GM12878 (cell line): ENCODE measurements at regions of chr1 and their contacts with region 1.

Region 1: DNA sequence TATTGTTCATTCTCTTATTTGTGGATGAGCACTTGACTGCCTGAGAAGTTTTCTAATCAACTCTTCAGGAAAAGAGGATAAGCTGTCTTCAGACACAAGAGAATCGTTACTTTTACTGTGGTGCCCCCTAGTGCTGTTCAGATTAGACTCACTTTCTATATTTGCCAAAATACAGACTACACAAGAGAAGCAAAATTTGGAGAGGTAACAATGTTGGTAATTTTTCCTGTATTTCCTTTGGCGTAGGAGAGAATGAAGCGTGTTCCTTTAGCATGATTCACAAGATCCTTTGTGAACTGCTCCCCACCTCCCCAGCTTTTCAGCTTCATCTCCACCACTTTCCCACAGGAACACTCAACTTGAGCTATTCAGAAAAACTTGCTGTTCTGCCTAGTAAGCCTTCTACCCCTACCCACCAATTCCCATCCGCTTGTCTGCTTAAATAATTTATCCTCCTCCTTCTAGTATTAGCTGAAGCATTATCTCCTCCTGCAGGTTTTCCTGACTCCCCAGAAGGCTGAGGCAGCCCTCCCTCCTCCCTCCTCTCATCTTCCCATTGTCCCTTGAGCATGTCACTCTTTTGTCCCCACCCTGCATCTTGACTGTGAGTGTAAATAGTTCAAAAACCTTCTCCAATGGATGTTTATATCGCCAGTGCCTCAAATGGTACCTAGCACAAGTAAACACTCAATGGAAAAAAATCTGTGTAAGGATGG is 4.5 kb downstream of the TNFSF4 start:
- DNase-seq: no peak
- ATAC-seq: peak; percentile 54
- H3K4me3 ChIP-seq: no peak overlapping the region
- H3K27ac ChIP-seq: no peak overlapping the region
- H3K4me1 ChIP-seq: peaks cover 14% of the 10 kb centered on the region
- H3K27me3 ChIP-seq: no peaks in the 10 kb centered on the region
- CTCF ChIP-seq: peak; percentile 54 to 69 (median 62)
- EP300 ChIP-seq: no peak
- POLR2A ChIP-seq: no peak
- RAD21 ChIP-seq: peak; percentile 90

Region 2: DNA sequence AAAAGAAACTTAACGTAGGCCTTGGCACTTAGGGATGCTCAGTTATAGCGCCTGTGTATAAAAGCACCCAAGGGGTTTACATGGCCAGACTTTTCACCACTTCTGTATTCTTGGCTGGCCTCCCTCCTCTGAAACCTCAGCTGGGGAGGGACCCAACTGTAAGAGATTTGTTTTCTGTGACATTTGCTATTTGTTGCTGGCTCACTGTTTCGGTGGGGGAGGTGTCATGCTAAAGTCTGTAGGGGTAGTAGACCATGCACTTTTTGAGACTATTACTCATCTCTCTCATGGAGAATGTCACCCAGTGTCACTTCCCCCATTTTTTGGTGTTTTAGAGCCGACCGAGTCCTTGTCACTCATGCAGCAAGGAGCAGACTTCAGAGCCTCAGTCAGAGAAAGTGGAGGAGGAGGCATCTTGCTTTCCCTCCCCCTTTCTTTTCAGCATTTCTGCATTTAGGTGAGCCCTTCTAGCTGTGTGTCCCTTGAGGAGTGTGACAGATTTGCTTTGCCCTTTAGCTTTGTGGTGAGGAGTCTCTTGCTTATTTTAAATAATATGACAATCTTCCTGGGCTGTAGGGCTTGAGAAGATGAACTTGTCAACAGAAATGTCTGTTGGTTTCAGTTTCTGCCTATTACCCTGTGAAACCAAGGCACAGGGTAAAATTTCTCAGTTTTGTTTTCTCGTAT is 383.6 kb before region 1 on chr1:
- CTCF ChIA-PET with region 1: interaction called, 414 read pairs
- POLR2A ChIA-PET with region 1: interaction called, 4 read pairs
- RAD21 ChIA-PET with region 1: interaction called, 245 read pairs
- SMC1A ChIA-PET with region 1: interaction called, 316 read pairs
- in situ Hi-C with region 1: loop called (anchors 5 kb)
- intact Hi-C with region 1: loop called (anchors 2 kb)
- DNase-seq: peak; percentile 99
- ATAC-seq: peak; percentile 95
- H3K4me3 ChIP-seq: no peak overlapping the region; the same call in 1 of the 2 replicates
- H3K27ac ChIP-seq: peak overlapping the region; percentile 73
- H3K4me1 ChIP-seq: peaks cover 32% of the 10 kb centered on the region
- H3K27me3 ChIP-seq: no peaks in the 10 kb centered on the region
- CTCF ChIP-seq: no peak
- EP300 ChIP-seq: peak; percentile 91 to 92
- POLR2A ChIP-seq: no peak
- RAD21 ChIP-seq: peak; percentile 23; the same call in 1 of the 2 replicates

Region 3: DNA sequence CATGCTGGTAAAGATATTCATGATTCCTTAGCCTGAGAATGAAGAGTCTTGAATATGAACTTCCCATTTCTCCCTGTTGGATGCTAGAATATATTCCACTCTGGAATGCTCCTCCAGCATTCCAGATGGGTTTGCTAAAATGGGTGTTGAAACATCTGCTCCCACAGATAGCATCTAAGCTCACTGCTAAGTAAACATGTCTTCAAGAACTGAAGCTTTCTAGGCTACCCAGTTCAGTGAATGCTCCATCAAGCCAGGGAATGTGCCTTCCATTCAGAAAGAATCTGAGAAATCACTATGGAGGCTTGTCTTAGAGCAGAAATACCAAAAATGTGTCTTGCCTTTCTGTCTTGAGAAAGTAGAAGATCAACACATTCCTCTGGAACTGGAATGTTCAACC is 233.0 kb before region 1 on chr1:
- CTCF ChIA-PET with region 1: no interaction called
- POLR2A ChIA-PET with region 1: no interaction called
- RAD21 ChIA-PET with region 1: no interaction called
- SMC1A ChIA-PET with region 1: no interaction called
- in situ Hi-C with region 1: no loop called
- intact Hi-C with region 1: no loop called
- DNase-seq: no peak
- ATAC-seq: no peak
- H3K4me3 ChIP-seq: no peak overlapping the region
- H3K27ac ChIP-seq: no peak overlapping the region
- H3K4me1 ChIP-seq: no peaks in the 10 kb centered on the region
- H3K27me3 ChIP-seq: peaks cover 2% of the 10 kb centered on the region in 2 experiments; a peak in 2 of 4 replicates
- CTCF ChIP-seq: no peak
- EP300 ChIP-seq: no peak
- POLR2A ChIP-seq: no peak
- RAD21 ChIP-seq: no peak

Region 4: GRCh38 chr1:173099166-173099565 is 103.4 kb before region 1 on chr1:
- CTCF ChIA-PET with region 1: no interaction called
- POLR2A ChIA-PET with region 1: no interaction called
- RAD21 ChIA-PET with region 1: no interaction called
- SMC1A ChIA-PET with region 1: no interaction called
- in situ Hi-C with region 1: no loop called
- intact Hi-C with region 1: no loop called
- DNase-seq: no peak
- ATAC-seq: no peak
- H3K4me3 ChIP-seq: no peak overlapping the region
- H3K27ac ChIP-seq: no peak overlapping the region
- H3K4me1 ChIP-seq: no peaks in the 10 kb centered on the region
- H3K27me3 ChIP-seq: no peaks in the 10 kb centered on the region; a peak in 1 of 4 replicates
- CTCF ChIP-seq: no peak
- EP300 ChIP-seq: no peak
- POLR2A ChIP-seq: no peak
- RAD21 ChIP-seq: no peak

Region 5: GRCh38 chr1:173134029-173134428 is 68.6 kb before region 1 on chr1:
- CTCF ChIA-PET with region 1: no interaction called
- POLR2A ChIA-PET with region 1: no interaction called
- RAD21 ChIA-PET with region 1: no interaction called
- SMC1A ChIA-PET with region 1: no interaction called
- in situ Hi-C with region 1: no loop called
- intact Hi-C with region 1: no loop called
- DNase-seq: no peak
- ATAC-seq: no peak
- H3K4me3 ChIP-seq: no peak overlapping the region
- H3K27ac ChIP-seq: no peak overlapping the region
- H3K4me1 ChIP-seq: no peaks in the 10 kb centered on the region
- H3K27me3 ChIP-seq: no peaks in the 10 kb centered on the region
- CTCF ChIP-seq: no peak
- EP300 ChIP-seq: no peak
- POLR2A ChIP-seq: no peak
- RAD21 ChIP-seq: no peak

Region 6: DNA sequence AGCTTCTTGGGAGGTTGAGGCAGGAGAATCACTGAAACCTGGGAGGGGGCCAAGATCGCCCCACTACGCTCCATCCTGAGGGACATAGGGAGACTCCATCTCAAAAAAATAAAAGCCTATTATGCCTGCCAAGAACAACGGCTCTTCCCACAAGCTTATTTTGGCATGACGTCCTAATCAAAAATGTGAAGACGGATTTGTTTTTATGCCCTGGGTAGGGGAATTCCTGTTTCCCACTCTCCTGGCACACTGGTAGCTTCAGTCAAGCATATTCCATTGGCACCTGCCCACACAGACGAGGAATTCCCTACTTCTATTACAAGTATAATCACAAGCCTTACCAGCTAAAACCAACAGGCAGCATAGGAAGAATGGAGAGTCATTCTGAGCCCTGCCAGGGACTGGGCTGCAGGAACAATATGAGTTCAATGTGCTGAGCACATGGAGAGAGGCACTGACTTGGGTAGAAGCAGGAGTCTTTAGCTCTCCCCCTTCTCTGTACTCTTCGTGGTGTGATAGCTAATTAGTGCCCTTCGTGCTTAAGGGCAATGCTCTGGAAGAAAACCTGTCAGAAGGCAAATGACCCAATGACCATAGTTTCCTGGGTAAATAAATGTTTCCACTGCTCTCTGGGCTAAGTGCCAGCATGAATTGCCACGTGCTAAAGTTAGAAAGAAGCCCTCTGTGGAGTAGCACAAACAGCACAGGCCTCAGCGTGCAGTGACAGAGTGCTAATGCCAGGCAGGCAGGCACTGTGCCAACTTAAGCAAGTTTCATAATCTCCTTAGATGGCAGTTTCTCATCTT is 12.3 kb before region 1 on chr1:
- CTCF ChIA-PET with region 1: interaction called, 74 read pairs
- POLR2A ChIA-PET with region 1: interaction called, 3 read pairs
- RAD21 ChIA-PET with region 1: interaction called, 25 read pairs
- SMC1A ChIA-PET with region 1: interaction called, 77 read pairs
- in situ Hi-C with region 1: no loop called
- intact Hi-C with region 1: no loop called
- DNase-seq: peak; percentile 63
- ATAC-seq: peak; percentile 59
- H3K4me3 ChIP-seq: no peak overlapping the region
- H3K27ac ChIP-seq: no peak overlapping the region
- H3K4me1 ChIP-seq: no peaks in the 10 kb centered on the region
- H3K27me3 ChIP-seq: no peaks in the 10 kb centered on the region
- CTCF ChIP-seq: no peak
- EP300 ChIP-seq: no peak
- POLR2A ChIP-seq: no peak
- RAD21 ChIP-seq: no peak

Region 7: GRCh38 chr1:173249349-173249748 is 46.8 kb after region 1 on chr1:
- CTCF ChIA-PET with region 1: interaction called, 12 read pairs
- POLR2A ChIA-PET with region 1: no interaction called
- RAD21 ChIA-PET with region 1: interaction called, 4 read pairs
- SMC1A ChIA-PET with region 1: interaction called, 22 read pairs
- in situ Hi-C with region 1: no loop called
- intact Hi-C with region 1: no loop called
- DNase-seq: no peak
- ATAC-seq: peak; percentile 53
- H3K4me3 ChIP-seq: no peak overlapping the region
- H3K27ac ChIP-seq: no peak overlapping the region
- H3K4me1 ChIP-seq: no peaks in the 10 kb centered on the region
- H3K27me3 ChIP-seq: no peaks in the 10 kb centered on the region
- CTCF ChIP-seq: no peak
- EP300 ChIP-seq: no peak
- POLR2A ChIP-seq: no peak
- RAD21 ChIP-seq: no peak

Region 8: DNA sequence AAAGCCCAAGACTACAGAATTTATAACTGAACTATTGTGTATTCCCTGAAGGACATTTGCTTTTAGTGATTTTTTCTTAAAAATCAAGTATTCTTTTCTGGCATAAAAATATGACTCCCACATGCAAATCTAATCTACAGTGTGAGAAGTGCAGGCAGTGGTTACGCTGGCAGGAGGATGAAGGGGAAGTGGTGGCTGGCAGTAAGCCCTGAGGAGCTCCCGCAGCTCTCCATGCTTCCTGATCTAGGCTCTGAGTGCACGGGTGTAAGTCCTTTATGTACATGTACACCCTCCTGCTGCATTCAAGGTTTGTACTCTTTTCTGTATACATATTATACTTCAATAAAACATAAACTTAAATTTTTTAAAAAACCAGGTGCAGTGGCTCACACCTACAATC is 207.0 kb after region 1 on chr1:
- CTCF ChIA-PET with region 1: interaction called, 34 read pairs
- POLR2A ChIA-PET with region 1: interaction called, 7 read pairs
- RAD21 ChIA-PET with region 1: interaction called, 105 read pairs
- SMC1A ChIA-PET with region 1: interaction called, 348 read pairs
- in situ Hi-C with region 1: no loop called
- intact Hi-C with region 1: no loop called
- DNase-seq: no peak
- ATAC-seq: peak; percentile 17
- H3K4me3 ChIP-seq: peak overlapping the region; percentile 35; the same call in 1 of the 2 replicates
- H3K27ac ChIP-seq: peak overlapping the region; percentile 98
- H3K4me1 ChIP-seq: peaks cover 65% of the 10 kb centered on the region
- H3K27me3 ChIP-seq: no peaks in the 10 kb centered on the region
- CTCF ChIP-seq: no peak
- EP300 ChIP-seq: peak in 1 of 2 experiments; percentile 29; a peak in 1 of 4 replicates
- POLR2A ChIP-seq: no peak
- RAD21 ChIP-seq: no peak